Activated naive CD4-positive, alpha-beta T cell treated with anti-CD3 and anti-CD28 coated beads, Interleukin-2, amount 10 ng/mL, durations not matched to agents 7 days and 5 days (primary cell): ENCODE measurements at regions of chr5 and their contacts with region 1.

Region 1: GRCh38 chr5:95781101-95781583 is 41.4 kb downstream of the GLRX start:
- DNase-seq: peak; percentile 81
- H3K4me3 Mint-ChIP-seq: peak overlapping the region; percentile 47
- H3K27ac Mint-ChIP-seq: peak overlapping the region; percentile 0
- H3K4me1 Mint-ChIP-seq: peaks cover 26% of the 10 kb centered on the region
- H3K27me3 Mint-ChIP-seq: no peaks in the 10 kb centered on the region

Region 2: GRCh38 chr5:95664204-95664786 is 116.8 kb before region 1 on chr5:
- CTCF ChIA-PET with region 1: interaction called, 44 read pairs
- DNase-seq: peak; percentile 47
- H3K4me3 Mint-ChIP-seq: no peak overlapping the region
- H3K27ac Mint-ChIP-seq: no peak overlapping the region
- H3K4me1 Mint-ChIP-seq: no peaks in the 10 kb centered on the region
- H3K27me3 Mint-ChIP-seq: no peaks in the 10 kb centered on the region

Region 3: GRCh38 chr5:95718203-95718602 is 62.9 kb before region 1 on chr5:
- CTCF ChIA-PET with region 1: no interaction called
- DNase-seq: no peak
- H3K4me3 Mint-ChIP-seq: no peak overlapping the region
- H3K27ac Mint-ChIP-seq: no peak overlapping the region
- H3K4me1 Mint-ChIP-seq: peaks cover 7% of the 10 kb centered on the region
- H3K27me3 Mint-ChIP-seq: peaks cover 10% of the 10 kb centered on the region

Region 4: DNA sequence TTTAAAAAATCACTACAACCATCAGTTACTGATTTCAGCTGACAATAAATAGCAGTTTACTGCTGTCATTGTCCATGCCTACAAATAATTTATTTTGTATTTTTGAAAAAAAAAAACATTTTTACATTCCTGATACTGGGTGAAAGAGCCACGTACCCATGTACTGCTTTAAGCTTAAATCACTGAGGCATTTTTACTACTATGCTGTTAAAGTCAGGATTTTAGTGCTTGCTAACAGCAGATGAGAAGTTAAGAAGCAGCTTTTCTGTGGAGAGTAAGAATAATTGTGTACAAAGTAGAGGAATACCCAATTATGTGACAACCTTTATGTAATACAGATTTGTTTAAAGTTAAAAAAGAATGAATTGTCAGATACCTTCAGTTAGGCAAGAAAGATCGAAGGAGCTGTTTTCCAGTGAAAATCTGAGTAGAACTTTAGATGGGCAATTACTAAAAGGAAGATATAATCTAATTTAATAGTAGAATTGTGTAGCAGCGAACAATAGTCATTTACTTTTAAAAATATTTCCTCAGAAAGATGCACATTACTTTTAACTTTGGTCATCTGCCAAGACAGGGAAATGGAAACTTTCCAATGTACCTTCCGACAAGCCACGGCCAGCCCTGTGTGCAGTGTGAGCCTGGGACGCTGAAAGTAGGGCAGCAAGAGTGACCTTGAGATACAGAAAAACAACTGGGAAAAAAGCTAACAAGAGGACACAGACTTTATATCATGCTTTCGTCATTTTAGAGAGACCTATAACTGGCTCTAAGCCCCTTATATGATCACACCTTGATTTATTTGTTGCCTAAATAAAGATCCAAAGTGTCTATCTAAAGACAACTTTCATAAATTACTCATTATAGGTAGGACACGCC is 10.1 kb before region 1 on chr5:
- CTCF ChIA-PET with region 1: interaction called, 12 read pairs
- DNase-seq: no peak
- H3K4me3 Mint-ChIP-seq: no peak overlapping the region
- H3K27ac Mint-ChIP-seq: no peak overlapping the region
- H3K4me1 Mint-ChIP-seq: peaks cover 2% of the 10 kb centered on the region
- H3K27me3 Mint-ChIP-seq: peaks cover 19% of the 10 kb centered on the region

Region 5: GRCh38 chr5:95808686-95809413 is 27.7 kb after region 1 on chr5:
- CTCF ChIA-PET with region 1: interaction called, 40 read pairs
- DNase-seq: peak; percentile 91
- H3K4me3 Mint-ChIP-seq: peak overlapping the region; percentile 55
- H3K27ac Mint-ChIP-seq: peak overlapping the region; percentile 87
- H3K4me1 Mint-ChIP-seq: peaks cover 66% of the 10 kb centered on the region
- H3K27me3 Mint-ChIP-seq: no peaks in the 10 kb centered on the region

Region 6: DNA sequence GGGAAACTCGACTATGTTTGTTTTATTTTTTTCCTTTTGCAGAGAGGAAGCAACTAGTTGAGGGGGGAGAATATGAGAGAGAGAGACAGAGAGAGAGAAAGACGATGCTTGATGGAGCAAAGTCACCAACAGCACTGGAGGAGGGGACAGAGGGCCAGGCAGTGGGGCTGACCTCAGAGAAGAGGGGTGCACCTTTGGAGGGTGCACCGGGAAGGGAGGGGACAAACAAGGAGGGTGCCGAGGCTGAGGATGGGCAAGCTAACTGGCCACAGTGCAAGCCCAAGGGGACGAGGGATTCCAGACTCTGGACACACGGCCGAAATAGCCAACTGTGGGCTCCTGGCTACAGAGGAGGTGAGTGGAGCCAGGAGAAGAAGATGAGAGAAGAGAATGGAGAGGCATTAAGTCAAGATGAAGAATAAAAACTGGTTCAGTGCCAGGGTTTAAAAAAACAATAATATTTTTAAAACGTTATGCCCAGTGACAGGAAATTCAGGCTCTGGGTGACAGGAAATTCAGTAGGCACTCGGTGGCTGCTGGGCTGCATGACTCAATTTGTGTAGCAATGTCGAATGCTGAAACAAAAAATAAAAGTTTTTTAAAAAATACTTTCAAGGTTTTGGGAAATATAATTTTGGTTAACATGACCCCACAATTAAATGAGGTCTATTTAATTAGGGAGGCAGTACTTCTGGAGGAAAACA is 54.7 kb after region 1 on chr5:
- CTCF ChIA-PET with region 1: interaction called, 377 read pairs
- DNase-seq: peak; percentile 40
- H3K4me3 Mint-ChIP-seq: peak overlapping the region; percentile 75
- H3K27ac Mint-ChIP-seq: peak overlapping the region; percentile 90
- H3K4me1 Mint-ChIP-seq: peaks cover 54% of the 10 kb centered on the region
- H3K27me3 Mint-ChIP-seq: no peaks in the 10 kb centered on the region

Region 7: GRCh38 chr5:96336351-96336985 is 555.3 kb after region 1 on chr5:
- CTCF ChIA-PET with region 1: interaction called, 17 read pairs
- DNase-seq: peak; percentile 70
- H3K4me3 Mint-ChIP-seq: no peak overlapping the region
- H3K27ac Mint-ChIP-seq: no peak overlapping the region
- H3K4me1 Mint-ChIP-seq: peaks cover 4% of the 10 kb centered on the region
- H3K27me3 Mint-ChIP-seq: peaks cover 18% of the 10 kb centered on the region